ENCODE measurements at regions of chr1 and their contacts with region 1.

Region 1: GRCh38 chr1:32801096-32801715 is 16.0 kb downstream of the YARS1 start:
- DNase-seq: peak; percentile 68
- H3K4me3 Mint-ChIP-seq: peak overlapping the region; percentile 34
- H3K27ac Mint-ChIP-seq: peak overlapping the region; percentile 88
- H3K4me1 Mint-ChIP-seq: peaks cover 63% of the 10 kb centered on the region
- H3K27me3 Mint-ChIP-seq: no peaks in the 10 kb centered on the region

Region 2: DNA sequence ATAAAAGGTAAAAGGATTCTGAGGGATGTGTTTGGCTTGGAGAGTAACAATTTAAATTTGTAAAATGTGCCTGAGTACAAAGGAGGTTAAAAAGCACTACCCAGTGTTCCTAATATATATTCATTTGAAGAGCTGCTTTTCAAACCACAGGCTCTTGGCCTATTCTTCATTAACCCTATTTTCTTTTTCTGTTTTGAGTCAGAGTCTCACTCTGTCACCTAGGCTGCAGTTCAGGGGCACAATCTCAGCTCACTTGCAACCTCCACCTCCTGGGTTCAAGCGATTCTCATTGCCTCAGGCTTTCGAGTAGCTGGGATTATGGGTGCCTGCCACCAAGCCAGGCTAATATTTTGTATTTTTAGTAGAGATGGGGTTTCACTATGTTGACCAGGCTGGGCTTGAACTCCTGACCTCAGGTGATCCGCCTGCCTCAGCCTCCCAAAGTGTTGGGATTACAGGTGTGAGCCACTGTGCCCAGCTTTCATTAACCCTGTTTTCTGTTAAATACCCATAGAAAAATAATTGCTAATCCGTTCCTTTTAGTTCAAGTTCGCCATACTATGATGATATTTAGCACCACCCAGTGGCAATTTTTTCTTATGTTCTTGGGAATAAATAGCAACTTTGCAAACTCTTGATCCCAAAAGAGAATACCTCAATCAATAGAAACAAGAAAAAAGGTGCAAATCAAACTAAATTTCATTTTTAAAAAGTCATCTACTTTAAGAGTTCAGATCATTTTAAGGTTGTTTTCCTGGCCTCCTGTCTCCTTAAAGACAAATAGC is 181.3 kb before region 1 on chr1:
- CTCF ChIA-PET with region 1: no interaction called
- intact Hi-C with region 1: loop called (anchors 1 kb)
- DNase-seq: no peak
- H3K4me3 Mint-ChIP-seq: no peak overlapping the region
- H3K27ac Mint-ChIP-seq: no peak overlapping the region
- H3K4me1 Mint-ChIP-seq: peaks cover 36% of the 10 kb centered on the region
- H3K27me3 Mint-ChIP-seq: no peaks in the 10 kb centered on the region

Region 3: DNA sequence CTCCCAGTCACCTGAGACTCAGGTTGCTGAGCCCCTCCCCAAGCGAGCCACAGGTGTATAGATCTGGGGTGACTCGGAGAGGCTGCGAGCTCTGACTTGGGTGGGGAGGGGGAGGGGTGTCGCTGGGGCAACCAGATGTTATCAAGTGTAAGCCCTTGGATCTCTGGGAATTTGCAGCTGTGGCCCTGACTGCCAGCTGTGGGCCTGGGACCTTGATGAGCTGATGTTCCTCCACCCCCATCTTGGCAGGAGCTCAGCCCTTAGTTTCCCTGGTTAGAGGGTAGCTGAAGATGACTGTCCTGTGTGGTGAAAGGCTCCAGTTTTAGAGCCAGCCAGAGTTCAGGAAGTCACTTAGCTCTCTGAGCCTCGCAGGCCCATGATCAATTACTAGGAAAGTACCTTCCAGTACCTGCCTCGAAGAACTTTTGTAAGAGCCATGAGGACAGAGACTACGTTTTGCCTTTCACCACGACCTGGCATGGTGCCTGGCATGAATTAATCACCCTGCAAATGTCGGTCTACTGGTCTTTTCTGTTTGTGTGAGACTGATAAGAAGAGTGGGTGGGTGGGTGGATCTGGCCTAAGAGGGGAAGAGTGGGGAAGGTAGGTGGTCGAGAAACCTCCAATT is 39.8 kb before region 1 on chr1:
- CTCF ChIA-PET with region 1: no interaction called
- intact Hi-C with region 1: loop called (anchors 1 kb)
- DNase-seq: peak; percentile 73
- H3K4me3 Mint-ChIP-seq: no peak overlapping the region
- H3K27ac Mint-ChIP-seq: peak overlapping the region; percentile 53
- H3K4me1 Mint-ChIP-seq: peaks cover 26% of the 10 kb centered on the region
- H3K27me3 Mint-ChIP-seq: no peaks in the 10 kb centered on the region

Region 4: GRCh38 chr1:32773018-32773763 is 28.0 kb before region 1 on chr1:
- CTCF ChIA-PET with region 1: no interaction called
- intact Hi-C with region 1: no loop called
- DNase-seq: peak; percentile 86
- H3K4me3 Mint-ChIP-seq: no peak overlapping the region
- H3K27ac Mint-ChIP-seq: no peak overlapping the region
- H3K4me1 Mint-ChIP-seq: peaks cover 10% of the 10 kb centered on the region
- H3K27me3 Mint-ChIP-seq: no peaks in the 10 kb centered on the region

Region 5: GRCh38 chr1:32817159-32817814 is 16.1 kb after region 1 on chr1 and contains the starts of genes S100PBP and YARS1:
- CTCF ChIA-PET with region 1: no interaction called
- intact Hi-C with region 1: loop called (anchors 1 kb)
- DNase-seq: peak; percentile 100
- H3K4me3 Mint-ChIP-seq: peak within 1 kb of the TSS; percentile 92
- H3K27ac Mint-ChIP-seq: peak within 1 kb of the TSS; percentile 94
- H3K4me1 Mint-ChIP-seq: peaks cover 51% of the 10 kb centered on the region
- H3K27me3 Mint-ChIP-seq: no peaks in the 10 kb centered on the region
- total RNA-seq, gene S100PBP: 26.1 to 31.2 TPM
- total RNA-seq, gene YARS1: 293 to 312 TPM

Region 6: GRCh38 chr1:32933742-32934322 is 132.6 kb after region 1 on chr1:
- CTCF ChIA-PET with region 1: no interaction called
- intact Hi-C with region 1: no loop called
- DNase-seq: no peak
- H3K4me3 Mint-ChIP-seq: no peak overlapping the region
- H3K27ac Mint-ChIP-seq: no peak overlapping the region
- H3K4me1 Mint-ChIP-seq: peaks cover 11% of the 10 kb centered on the region
- H3K27me3 Mint-ChIP-seq: no peaks in the 10 kb centered on the region

Region 7: GRCh38 chr1:33094971-33095604 is 293.9 kb after region 1 on chr1:
- CTCF ChIA-PET with region 1: no interaction called
- intact Hi-C with region 1: no loop called
- DNase-seq: peak; percentile 40
- H3K4me3 Mint-ChIP-seq: no peak overlapping the region
- H3K27ac Mint-ChIP-seq: no peak overlapping the region
- H3K4me1 Mint-ChIP-seq: peaks cover 28% of the 10 kb centered on the region
- H3K27me3 Mint-ChIP-seq: no peaks in the 10 kb centered on the region